ENCODE measurements at regions of chr2 and their contacts with region 1.

Region 1: DNA sequence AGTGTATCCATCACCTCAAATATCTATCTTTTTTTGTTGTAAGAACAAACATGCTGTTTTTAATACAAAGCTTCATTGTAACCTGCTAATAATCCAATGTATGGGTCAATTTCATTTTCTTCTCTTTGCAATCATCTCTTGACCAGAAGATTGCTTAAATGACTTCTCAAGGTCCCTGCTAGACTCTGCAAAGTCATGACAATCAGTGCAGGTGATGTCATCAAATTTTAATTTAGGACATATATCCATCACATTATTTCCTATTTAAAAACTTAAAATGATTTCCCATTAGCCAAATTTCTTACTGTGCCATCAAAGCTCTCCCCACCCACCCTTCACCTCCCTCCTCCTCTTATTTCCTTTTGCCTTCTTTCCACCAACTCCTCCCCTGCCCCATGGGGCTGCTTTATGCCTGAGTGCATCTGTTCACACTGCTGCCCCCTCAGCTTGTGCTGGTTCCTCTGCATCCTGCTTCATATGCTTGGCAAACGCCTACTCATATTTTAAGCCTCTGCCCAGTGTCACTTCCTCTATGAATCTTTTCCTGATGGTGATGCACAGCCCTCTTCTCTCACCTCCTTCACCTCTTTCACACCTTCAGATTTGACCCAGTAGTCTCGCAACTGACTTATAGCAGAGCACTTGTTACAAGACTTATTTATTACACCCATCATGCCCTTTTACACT is 20.3 kb downstream of the PLEK start:
- DNase-seq: peak; percentile 63
- H3K4me3 Mint-ChIP-seq: peak overlapping the region; percentile 10
- H3K27ac Mint-ChIP-seq: peak overlapping the region; percentile 45
- H3K4me1 Mint-ChIP-seq: peaks cover 38% of the 10 kb centered on the region
- H3K27me3 Mint-ChIP-seq: peaks cover 12% of the 10 kb centered on the region

Region 2: GRCh38 chr2:68089961-68090360 is 295.4 kb before region 1 on chr2:
- intact Hi-C with region 1: no loop called
- DNase-seq: no peak
- H3K4me3 Mint-ChIP-seq: no peak overlapping the region
- H3K27ac Mint-ChIP-seq: no peak overlapping the region
- H3K4me1 Mint-ChIP-seq: no peaks in the 10 kb centered on the region
- H3K27me3 Mint-ChIP-seq: peaks cover 1% of the 10 kb centered on the region

Region 3: DNA sequence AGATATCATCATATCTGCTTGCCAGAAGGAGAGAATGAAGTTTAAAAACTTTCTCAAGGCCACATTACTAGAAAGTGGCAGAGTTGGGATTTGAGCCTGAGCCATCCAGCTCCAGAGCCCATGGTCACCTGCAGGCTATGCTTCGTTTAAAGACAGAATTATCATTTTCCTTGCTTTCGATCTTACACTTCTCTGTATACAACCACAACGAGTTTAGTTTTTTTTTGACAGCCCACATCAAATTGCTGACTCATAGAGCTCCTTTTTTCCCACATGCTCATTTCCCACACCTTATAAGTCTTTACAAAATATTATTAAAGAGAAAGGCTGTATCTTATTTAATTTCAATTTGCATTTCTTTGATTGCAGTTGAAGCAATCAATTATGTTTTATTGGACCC is 13.8 kb before region 1 on chr2:
- intact Hi-C with region 1: loop called (anchors 2 kb)
- DNase-seq: no peak
- H3K4me3 Mint-ChIP-seq: no peak overlapping the region
- H3K27ac Mint-ChIP-seq: no peak overlapping the region
- H3K4me1 Mint-ChIP-seq: peaks cover 12% of the 10 kb centered on the region
- H3K27me3 Mint-ChIP-seq: peaks cover 42% of the 10 kb centered on the region

Region 4: GRCh38 chr2:68423966-68424650 is 38.7 kb after region 1 on chr2:
- intact Hi-C with region 1: loop called (anchors 2 kb)
- DNase-seq: peak; percentile 64
- H3K4me3 Mint-ChIP-seq: no peak overlapping the region
- H3K27ac Mint-ChIP-seq: no peak overlapping the region
- H3K4me1 Mint-ChIP-seq: peaks cover 3% of the 10 kb centered on the region
- H3K27me3 Mint-ChIP-seq: peaks cover 12% of the 10 kb centered on the region

Region 5: GRCh38 chr2:68516051-68516955 is 130.9 kb after region 1 on chr2:
- intact Hi-C with region 1: loop called (anchors 5 kb)
- DNase-seq: no peak
- H3K4me3 Mint-ChIP-seq: no peak overlapping the region
- H3K27ac Mint-ChIP-seq: no peak overlapping the region
- H3K4me1 Mint-ChIP-seq: peaks cover 9% of the 10 kb centered on the region
- H3K27me3 Mint-ChIP-seq: no peaks in the 10 kb centered on the region

Region 6: GRCh38 chr2:68734688-68735525 is 349.5 kb after region 1 on chr2 and contains the start of gene ARHGAP25:
- intact Hi-C with region 1: loop called (anchors 5 kb)
- DNase-seq: peak; percentile 89
- H3K4me3 Mint-ChIP-seq: no peak within 1 kb of the TSS
- H3K27ac Mint-ChIP-seq: no peak within 1 kb of the TSS
- H3K4me1 Mint-ChIP-seq: peaks cover 41% of the 10 kb centered on the region
- H3K27me3 Mint-ChIP-seq: no peaks in the 10 kb centered on the region
- total RNA-seq, gene ARHGAP25: 37.8 and 42.2 TPM in 2 replicates

Measured in activated CD4-positive, alpha-beta T cell treated with anti-CD3 and anti-CD28 coated beads, Interleukin-2, amount 10 ng/mL, durations not matched to agents 24 days and 14 days (primary cell).